ENCODE measurements at regions of chr11 and their contacts with region 1.

Region 1: GRCh38 chr11:111982019-111982464 is 43.2 kb upstream of the DLAT start:
- DNase-seq: peak; percentile 73
- H3K4me3 Mint-ChIP-seq: peak overlapping the region; percentile 59
- H3K27ac Mint-ChIP-seq: peak overlapping the region; percentile 82
- H3K4me1 Mint-ChIP-seq: peaks cover 28% of the 10 kb centered on the region
- H3K27me3 Mint-ChIP-seq: no peaks in the 10 kb centered on the region
- CTCF ChIP-seq: no peak

Region 2: DNA sequence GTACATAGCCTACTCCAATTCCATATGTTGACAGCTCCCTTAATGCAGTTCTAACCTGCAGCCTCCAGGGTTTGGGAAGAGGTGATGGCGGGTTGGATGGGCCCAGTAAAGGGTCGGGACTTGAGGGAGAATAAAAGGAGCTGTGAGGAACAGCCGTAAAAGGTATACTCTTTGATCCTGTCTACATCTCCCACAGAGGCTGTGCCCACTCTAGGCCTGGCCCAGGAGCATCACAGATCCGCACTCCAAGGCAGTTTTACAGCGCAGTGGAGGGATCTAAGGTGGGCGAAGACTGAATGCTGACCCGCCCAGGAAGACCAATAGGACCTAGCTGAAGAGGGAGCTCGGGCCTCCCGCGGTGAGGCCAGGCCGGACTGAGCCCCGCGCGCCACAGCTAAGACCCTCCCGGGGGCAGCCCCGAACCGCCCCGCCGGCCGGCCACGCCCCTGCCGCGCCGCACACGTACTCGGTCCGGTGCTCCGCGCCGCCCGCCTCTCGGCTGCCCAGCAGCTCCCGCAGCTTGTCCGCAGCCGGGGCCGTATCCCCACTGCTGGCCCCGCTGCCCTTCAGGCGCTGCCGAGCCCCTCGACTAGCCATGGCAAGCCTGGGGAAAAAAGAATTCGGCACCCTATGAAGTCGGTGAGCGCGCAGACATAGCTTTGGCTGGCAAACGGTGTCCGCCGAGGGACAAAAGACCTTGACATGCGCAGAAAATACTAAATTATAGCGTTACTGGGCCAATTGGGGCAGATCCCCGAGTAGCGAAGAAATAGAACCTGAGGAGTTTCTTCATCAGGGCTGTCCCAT is 111.0 kb before region 1 on chr11 and contains the start of gene ALG9:
- CTCF ChIA-PET with region 1: interaction called, 12 read pairs
- intact Hi-C with region 1: no loop called
- DNase-seq: peak; percentile 76
- H3K4me3 Mint-ChIP-seq: peak within 1 kb of the TSS; percentile 78
- H3K27ac Mint-ChIP-seq: peak within 1 kb of the TSS; percentile 70
- H3K4me1 Mint-ChIP-seq: no peaks in the 10 kb centered on the region
- H3K27me3 Mint-ChIP-seq: no peaks in the 10 kb centered on the region
- CTCF ChIP-seq: peak; percentile 8
- total RNA-seq, gene ALG9: 12.6 and 14.2 TPM in 2 replicates

Region 3: GRCh38 chr11:111878849-111879636 is 103.0 kb before region 1 on chr11 and contains the starts of genes CFAP68 and FDXACB1:
- CTCF ChIA-PET with region 1: interaction called, 6 read pairs
- intact Hi-C with region 1: loop called (anchors 1 kb)
- DNase-seq: peak; percentile 93
- H3K4me3 Mint-ChIP-seq: peak within 1 kb of the TSS; percentile 80
- H3K27ac Mint-ChIP-seq: peak within 1 kb of the TSS; percentile 93
- H3K4me1 Mint-ChIP-seq: peaks cover 9% of the 10 kb centered on the region
- H3K27me3 Mint-ChIP-seq: no peaks in the 10 kb centered on the region
- CTCF ChIP-seq: peak; percentile 78
- total RNA-seq, gene CFAP68: 28.1 and 29.8 TPM in 2 replicates
- total RNA-seq, gene FDXACB1: 1.7 and 1.8 TPM in 2 replicates

Region 4: DNA sequence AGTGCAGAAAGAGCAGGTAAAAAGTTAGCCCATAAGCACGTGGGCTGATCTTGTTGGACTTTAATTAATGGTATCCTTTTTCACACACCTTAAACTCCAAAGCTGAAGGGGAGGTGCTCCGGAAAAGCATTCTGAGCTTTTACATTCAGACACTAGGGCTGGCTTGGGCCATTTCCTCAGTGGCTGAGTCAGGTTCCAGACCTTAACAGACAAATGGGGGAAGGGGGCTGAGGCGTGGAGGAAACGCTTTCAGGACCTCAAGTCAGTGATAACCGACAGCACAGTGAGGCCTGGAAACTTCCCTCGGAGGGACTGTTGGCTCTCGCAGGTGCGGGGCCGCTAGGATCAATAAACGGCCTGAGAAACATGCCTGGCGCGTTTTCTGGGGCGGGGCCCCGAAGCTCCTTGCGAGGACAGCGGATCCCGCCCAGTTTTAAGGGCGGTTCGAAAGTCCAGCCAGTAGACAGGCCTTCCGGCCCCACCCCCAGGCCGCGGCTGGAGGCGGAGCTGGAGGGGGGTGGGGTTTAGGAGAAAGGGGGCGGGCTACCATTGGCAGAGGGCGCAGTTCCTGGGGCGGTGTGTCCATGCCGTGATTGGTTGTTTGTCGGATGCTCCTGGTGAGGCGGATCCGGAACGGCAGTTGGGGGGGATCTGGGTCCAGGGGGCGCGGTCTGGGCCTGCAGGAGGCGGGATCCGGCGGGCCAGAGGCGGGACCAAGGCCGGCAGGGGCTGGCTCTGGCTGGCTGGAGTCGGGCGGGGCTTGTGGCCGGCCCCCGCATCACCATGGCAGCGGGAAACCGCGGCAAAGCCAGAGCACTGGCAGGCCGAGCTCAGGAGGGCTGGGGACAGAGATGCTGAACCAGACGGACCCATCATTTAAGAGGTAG is 55.3 kb before region 1 on chr11:
- CTCF ChIA-PET with region 1: interaction called, 20 read pairs
- intact Hi-C with region 1: loop called (anchors 2 kb)
- DNase-seq: peak; percentile 95
- H3K4me3 Mint-ChIP-seq: peak overlapping the region; percentile 70
- H3K27ac Mint-ChIP-seq: peak overlapping the region; percentile 68
- H3K4me1 Mint-ChIP-seq: peaks cover 23% of the 10 kb centered on the region
- H3K27me3 Mint-ChIP-seq: no peaks in the 10 kb centered on the region
- CTCF ChIP-seq: no peak

Region 5: GRCh38 chr11:111960916-111961315 is 21.1 kb before region 1 on chr11:
- CTCF ChIA-PET with region 1: interaction called, 10 read pairs
- intact Hi-C with region 1: no loop called
- DNase-seq: peak; percentile 34
- H3K4me3 Mint-ChIP-seq: no peak overlapping the region
- H3K27ac Mint-ChIP-seq: peak overlapping the region; percentile 71
- H3K4me1 Mint-ChIP-seq: peaks cover 15% of the 10 kb centered on the region
- H3K27me3 Mint-ChIP-seq: no peaks in the 10 kb centered on the region
- CTCF ChIP-seq: no peak

Region 6: GRCh38 chr11:112310419-112310818 is 328.4 kb after region 1 on chr11:
- CTCF ChIA-PET with region 1: no interaction called
- intact Hi-C with region 1: no loop called
- DNase-seq: no peak
- H3K4me3 Mint-ChIP-seq: no peak overlapping the region
- H3K27ac Mint-ChIP-seq: no peak overlapping the region
- H3K4me1 Mint-ChIP-seq: no peaks in the 10 kb centered on the region
- H3K27me3 Mint-ChIP-seq: no peaks in the 10 kb centered on the region
- CTCF ChIP-seq: no peak

Region 7: DNA sequence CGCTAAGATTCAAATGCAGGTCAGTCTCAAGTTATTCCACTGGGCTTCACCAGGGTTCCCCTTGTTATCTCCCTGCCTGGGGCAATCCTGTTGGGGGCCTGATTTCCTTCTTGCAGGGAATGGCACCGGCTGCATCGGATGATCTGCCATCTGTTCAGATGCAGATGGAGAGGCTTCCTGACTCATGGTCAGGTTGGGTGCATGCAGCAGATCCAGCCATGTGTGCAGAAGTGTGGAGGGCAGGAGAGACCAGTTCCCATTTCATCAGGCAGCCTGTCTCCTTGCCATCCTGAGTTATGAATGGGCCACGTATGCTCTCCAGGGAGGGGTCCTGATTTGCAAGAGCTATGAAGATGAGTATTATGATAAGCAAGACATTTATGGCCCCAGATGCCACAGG is 439.8 kb after region 1 on chr11:
- CTCF ChIA-PET with region 1: no interaction called
- intact Hi-C with region 1: no loop called
- DNase-seq: no peak
- H3K4me3 Mint-ChIP-seq: no peak overlapping the region
- H3K27ac Mint-ChIP-seq: no peak overlapping the region
- H3K4me1 Mint-ChIP-seq: no peaks in the 10 kb centered on the region
- H3K27me3 Mint-ChIP-seq: peaks cover 60% of the 10 kb centered on the region
- CTCF ChIP-seq: no peak